A673 (cell line): ENCODE measurements at regions of chr10 and their contacts with region 1.

Region 1: GRCh38 chr10:81843040-81843439 is 32.0 kb upstream of the NRG3 start:
- DNase-seq: no peak
- H3K4me3 ChIP-seq: no peak overlapping the region
- H3K27ac ChIP-seq: no peak overlapping the region
- H3K4me1 ChIP-seq: no peaks in the 10 kb centered on the region
- H3K27me3 ChIP-seq: no peaks in the 10 kb centered on the region
- CTCF ChIP-seq: no peak

Region 2: DNA sequence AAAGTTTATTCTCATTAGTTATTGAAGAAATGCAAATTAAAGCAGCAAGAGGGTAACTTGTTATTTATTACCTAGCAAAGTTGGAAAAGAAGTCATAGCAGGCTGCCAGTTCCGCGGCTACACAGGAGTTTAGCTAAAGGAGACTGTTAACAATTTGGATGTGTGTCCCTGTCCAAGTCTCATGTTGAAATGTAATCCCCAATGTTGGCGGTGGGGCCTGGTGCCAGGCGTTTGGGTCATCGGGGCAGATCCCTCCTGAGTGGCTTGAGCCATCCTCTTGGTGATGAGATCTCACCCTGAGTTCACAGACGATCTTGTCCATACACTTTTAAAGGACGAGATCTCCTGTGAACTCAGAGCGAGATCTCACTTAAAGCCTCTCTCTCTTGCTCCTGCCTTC is 697.1 kb before region 1 on chr10:
- CTCF ChIA-PET with region 1: no interaction called
- POLR2A ChIA-PET with region 1: no interaction called
- intact Hi-C with region 1: no loop called
- DNase-seq: no peak
- H3K4me3 ChIP-seq: no peak overlapping the region
- H3K27ac ChIP-seq: no peak overlapping the region
- H3K4me1 ChIP-seq: no peaks in the 10 kb centered on the region
- H3K27me3 ChIP-seq: no peaks in the 10 kb centered on the region
- CTCF ChIP-seq: no peak

Region 3: DNA sequence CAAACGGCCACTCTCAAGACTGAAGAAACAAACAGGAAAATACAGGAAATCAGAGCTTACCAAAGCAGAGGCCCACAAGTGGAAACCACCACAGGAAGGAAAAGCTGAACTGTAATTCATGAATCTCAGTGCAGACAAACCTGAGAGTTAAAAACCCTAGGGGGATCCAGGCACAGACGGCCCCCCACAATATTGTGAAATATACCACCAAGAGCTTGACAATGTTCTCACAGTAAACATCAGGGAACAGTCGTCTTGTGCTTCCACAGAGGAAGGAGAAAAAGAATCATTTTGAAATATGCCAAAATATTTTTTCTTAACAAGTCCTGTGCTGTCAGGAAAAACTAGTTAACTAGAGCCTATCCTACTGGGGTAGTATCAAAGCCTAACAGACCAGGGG is 36.2 kb before region 1 on chr10:
- CTCF ChIA-PET with region 1: no interaction called
- POLR2A ChIA-PET with region 1: no interaction called
- intact Hi-C with region 1: no loop called
- DNase-seq: no peak
- H3K4me3 ChIP-seq: no peak overlapping the region
- H3K27ac ChIP-seq: no peak overlapping the region
- H3K4me1 ChIP-seq: no peaks in the 10 kb centered on the region
- H3K27me3 ChIP-seq: no peaks in the 10 kb centered on the region
- CTCF ChIP-seq: no peak

Region 4: DNA sequence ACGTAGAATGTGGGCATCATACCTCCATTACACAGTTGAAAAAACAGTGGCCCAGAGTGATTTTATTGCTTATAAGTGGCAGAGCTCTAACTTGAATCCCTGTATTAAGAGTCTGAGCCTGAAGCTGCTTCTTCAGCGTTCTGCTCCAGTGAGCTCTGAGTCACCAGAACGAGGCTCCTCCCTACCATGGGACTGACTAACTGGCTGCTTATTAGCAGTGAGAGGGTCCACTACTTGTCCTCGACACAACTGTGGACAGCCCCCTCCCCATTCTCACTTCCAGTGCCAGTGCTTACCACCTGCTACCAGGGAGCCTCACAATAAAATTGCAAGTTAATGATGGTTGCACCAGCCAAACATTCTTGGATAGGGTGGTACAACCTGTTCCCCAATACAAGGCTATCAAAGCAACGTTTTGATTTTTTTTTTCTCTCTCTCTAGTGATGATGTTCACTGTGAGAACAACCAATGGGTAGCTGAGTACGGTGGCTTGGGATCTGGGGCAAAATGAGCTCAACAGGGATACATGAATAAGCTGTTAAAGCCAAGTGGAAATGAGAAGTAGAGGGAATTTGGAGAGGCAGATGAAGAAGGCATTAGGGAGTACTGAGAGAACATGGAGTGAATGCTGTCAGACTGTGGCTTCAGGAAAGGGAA is 29.3 kb after region 1 on chr10:
- CTCF ChIA-PET with region 1: no interaction called
- POLR2A ChIA-PET with region 1: interaction called, 17 read pairs
- intact Hi-C with region 1: no loop called
- DNase-seq: no peak
- H3K4me3 ChIP-seq: no peak overlapping the region
- H3K27ac ChIP-seq: no peak overlapping the region
- H3K4me1 ChIP-seq: no peaks in the 10 kb centered on the region
- H3K27me3 ChIP-seq: peaks cover 49% of the 10 kb centered on the region
- CTCF ChIP-seq: no peak